Right cardiac atrium (tissue), 5 donors: ENCODE measurements at regions of chr19 and their contacts with region 1.

Region 1: DNA sequence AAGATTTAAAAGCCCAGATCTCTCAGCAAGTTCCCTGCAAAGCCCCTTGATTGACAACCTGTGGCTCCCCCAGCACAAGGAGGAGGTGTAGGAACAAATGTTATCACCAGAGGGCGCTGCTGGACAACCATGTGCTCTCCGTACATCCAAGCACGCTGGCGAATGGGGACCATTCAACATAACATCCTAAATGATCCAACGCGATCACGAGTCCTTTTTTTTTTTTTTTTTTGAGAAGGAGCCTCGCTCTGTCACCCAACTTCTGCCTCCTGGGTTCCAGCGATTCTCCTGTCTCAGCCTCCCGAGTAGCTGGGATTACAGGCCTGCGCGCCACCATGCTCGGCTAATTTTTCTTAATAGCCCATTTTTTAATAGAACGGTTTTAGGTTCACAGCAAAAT is 52.0 kb downstream of the NWD1 start:
- DNase-seq: peak; percentile 73 to 88 (median 80)
- ATAC-seq: peak; percentile 79 to 85
- H3K4me3 ChIP-seq: no peak overlapping the region
- H3K27ac ChIP-seq: no peak overlapping the region
- H3K4me1 ChIP-seq: no peaks in the 10 kb centered on the region
- H3K27me3 ChIP-seq: no peaks in the 10 kb centered on the region

Region 2: DNA sequence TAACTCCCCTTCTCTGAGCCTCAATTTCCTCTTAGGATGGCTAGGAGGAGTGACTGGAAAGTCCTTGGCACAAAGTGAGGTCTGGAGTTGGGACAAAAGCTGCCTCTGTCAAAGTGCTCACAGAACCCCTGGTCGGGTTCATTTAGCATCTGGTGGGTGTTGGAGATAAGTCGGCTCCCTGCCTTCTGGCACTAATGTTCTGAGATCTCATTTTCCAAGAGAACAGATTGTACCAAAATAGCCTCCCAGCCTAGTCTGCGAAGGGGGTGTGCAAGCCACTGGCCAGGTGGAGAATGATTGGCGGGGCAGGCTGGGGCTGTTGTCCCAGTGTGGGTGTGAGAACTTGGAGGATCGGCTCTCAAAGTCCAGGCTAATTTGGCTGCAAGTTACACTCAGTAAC is 72.7 kb before region 1 on chr19:
- intact Hi-C with region 1: no loop called
- DNase-seq: peak; percentile 53 to 79 (median 75)
- ATAC-seq: peak; percentile 85 to 89
- H3K4me3 ChIP-seq: no peak overlapping the region
- H3K27ac ChIP-seq: no peak overlapping the region
- H3K4me1 ChIP-seq: peaks cover 2% of the 10 kb centered on the region
- H3K27me3 ChIP-seq: no peaks in the 10 kb centered on the region

Region 3: DNA sequence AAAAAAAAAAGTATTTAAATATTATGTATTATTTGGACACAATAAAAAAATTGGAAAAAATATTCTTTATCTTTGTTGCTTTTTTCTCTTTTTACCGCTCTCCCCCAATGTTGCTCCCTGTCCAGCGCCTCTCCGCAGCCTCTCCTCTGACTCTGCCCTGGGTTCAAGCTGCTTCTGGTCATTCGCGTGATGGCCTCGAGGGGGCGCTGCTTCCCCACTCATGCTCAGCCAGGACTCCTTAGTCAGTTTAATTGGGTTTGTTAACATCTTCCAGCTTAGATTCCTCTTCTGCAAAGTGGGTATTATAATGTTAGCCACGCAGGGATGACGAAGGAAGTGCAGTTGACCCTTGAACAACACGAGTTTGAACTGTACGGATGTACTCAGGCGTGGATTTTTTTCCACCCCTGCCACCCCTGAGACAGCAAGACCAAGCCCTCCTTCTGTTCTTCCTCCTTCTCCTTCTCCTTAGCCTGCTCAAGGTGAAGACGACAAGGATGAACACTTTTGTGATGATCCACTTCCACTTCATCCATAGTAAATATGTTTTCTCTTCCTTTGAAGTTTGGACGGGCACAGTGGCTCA is 56.8 kb before region 1 on chr19:
- intact Hi-C with region 1: no loop called
- DNase-seq: peak; percentile 56 to 82 (median 82)
- ATAC-seq: peak; percentile 59 to 75
- H3K4me3 ChIP-seq: no peak overlapping the region
- H3K27ac ChIP-seq: no peak overlapping the region
- H3K4me1 ChIP-seq: no peaks in the 10 kb centered on the region
- H3K27me3 ChIP-seq: no peaks in the 10 kb centered on the region

Region 4: DNA sequence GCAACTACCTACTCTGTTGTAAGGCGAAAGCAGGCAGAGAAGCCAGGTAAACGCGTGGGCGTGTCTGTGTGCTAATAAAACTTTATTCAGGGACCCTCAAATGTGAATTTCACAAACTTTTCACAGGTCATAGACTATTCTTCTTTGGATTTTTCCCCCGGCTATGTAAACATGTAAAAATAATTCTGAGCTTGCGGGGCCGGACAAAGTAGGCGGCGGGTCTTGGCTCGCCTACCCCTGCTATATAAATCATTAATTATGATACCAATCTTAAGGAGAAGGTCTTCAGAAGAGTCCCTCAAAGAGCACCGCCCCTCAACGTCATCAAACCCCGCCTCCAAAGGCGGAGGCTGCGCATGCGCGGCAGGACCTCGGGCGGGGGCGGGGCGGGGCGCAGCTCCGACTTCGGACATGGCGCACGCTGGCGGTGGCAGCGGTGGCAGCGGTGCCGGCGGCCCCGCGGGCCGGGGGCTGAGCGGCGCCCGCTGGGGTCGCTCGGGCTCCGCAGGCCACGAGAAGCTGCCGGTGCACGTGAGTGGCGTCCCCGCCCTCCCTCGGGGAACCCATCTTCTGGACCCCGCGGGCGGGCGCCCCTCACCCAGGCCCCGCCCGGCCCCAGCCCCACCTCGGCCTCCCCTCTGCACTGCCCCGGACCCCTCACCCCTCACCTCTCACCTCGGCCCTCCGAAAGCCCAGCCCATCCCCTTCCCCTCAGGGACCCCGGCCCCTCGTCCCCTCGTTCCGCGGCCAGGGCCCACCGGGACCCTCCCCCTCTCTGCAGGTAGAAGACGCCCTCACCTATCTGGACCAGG is 57.6 kb after region 1 on chr19 and contains the start of gene SIN3B:
- intact Hi-C with region 1: loop called in 1 of 4 experiments (anchors 10 kb)
- DNase-seq: peak; percentile 81 to 94 (median 92)
- ATAC-seq: peak; percentile 85 to 93
- H3K4me3 ChIP-seq: peak within 1 kb of the TSS; percentile 84
- H3K27ac ChIP-seq: peak within 1 kb of the TSS; percentile 70
- H3K4me1 ChIP-seq: peaks cover 4% of the 10 kb centered on the region
- H3K27me3 ChIP-seq: no peaks in the 10 kb centered on the region
- total RNA-seq, gene SIN3B: 27.8 to 35.4 (median 30.0) TPM

Region 5: DNA sequence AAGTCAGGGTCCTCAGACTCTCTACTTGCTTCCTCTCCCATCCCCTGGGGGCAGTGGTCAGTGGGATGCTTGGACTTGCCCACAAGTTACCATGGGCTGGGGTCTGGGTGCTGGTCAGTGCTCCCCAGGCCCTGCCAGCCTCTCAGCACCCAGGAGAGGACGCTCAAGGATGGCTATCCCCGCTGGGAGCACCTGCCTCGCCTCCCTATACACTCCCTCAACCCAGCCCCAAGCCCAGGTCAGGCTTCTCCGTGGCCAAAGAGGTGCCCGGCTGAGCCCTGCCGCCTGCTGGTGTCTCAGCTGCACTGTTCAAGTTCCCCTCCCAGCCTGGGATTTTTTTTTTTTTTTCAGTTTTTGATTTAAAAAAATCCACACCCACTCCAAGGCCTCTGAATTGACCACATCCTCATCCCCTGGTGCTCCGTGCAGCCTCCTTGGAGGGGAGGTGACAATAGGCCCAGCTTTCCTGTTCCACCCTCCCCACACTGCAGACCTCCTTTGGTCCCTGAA is 128.0 kb after region 1 on chr19:
- intact Hi-C with region 1: loop called in 2 of 4 experiments (anchors 5 to 10 kb)
- DNase-seq: peak in 2 of 3 donors; percentile 75 to 80
- ATAC-seq: no peak
- H3K4me3 ChIP-seq: no peak overlapping the region
- H3K27ac ChIP-seq: no peak overlapping the region
- H3K4me1 ChIP-seq: no peaks in the 10 kb centered on the region
- H3K27me3 ChIP-seq: no peaks in the 10 kb centered on the region

Region 6: GRCh38 chr19:17052439-17053210 is 281.0 kb after region 1 on chr19:
- intact Hi-C with region 1: loop called (anchors 2 to 5 kb)
- DNase-seq: peak in 1 of 3 donors; percentile 56
- ATAC-seq: peak; percentile 53 to 61
- H3K4me3 ChIP-seq: no peak overlapping the region
- H3K27ac ChIP-seq: no peak overlapping the region
- H3K4me1 ChIP-seq: no peaks in the 10 kb centered on the region
- H3K27me3 ChIP-seq: no peaks in the 10 kb centered on the region